CD8-positive, alpha-beta T cell (primary cell): ENCODE measurements at regions of chr19 and their contacts with region 1.

Region 1: GRCh38 chr19:56393119-56394012 is at the start of gene ZNF582:
- DNase-seq: peak; percentile 83 to 97 (median 89)
- ATAC-seq: peak; percentile 97
- H3K4me3 ChIP-seq: peak within 1 kb of the TSS; percentile 77 to 87
- H3K4me3 Mint-ChIP-seq: peak within 1 kb of the TSS; percentile 100
- H3K27ac ChIP-seq: peak within 1 kb of the TSS; percentile 94 to 96
- H3K27ac Mint-ChIP-seq: peak within 1 kb of the TSS; percentile 96
- H3K4me1 ChIP-seq: peaks cover 11% of the 10 kb centered on the region
- H3K4me1 Mint-ChIP-seq: peaks cover 22% of the 10 kb centered on the region
- H3K27me3 ChIP-seq: no peaks in the 10 kb centered on the region
- H3K27me3 Mint-ChIP-seq: no peaks in the 10 kb centered on the region
- CTCF ChIP-seq: peak; percentile 71
- total RNA-seq, gene ZNF582: 4.6 to 4.7 TPM

Region 2: DNA sequence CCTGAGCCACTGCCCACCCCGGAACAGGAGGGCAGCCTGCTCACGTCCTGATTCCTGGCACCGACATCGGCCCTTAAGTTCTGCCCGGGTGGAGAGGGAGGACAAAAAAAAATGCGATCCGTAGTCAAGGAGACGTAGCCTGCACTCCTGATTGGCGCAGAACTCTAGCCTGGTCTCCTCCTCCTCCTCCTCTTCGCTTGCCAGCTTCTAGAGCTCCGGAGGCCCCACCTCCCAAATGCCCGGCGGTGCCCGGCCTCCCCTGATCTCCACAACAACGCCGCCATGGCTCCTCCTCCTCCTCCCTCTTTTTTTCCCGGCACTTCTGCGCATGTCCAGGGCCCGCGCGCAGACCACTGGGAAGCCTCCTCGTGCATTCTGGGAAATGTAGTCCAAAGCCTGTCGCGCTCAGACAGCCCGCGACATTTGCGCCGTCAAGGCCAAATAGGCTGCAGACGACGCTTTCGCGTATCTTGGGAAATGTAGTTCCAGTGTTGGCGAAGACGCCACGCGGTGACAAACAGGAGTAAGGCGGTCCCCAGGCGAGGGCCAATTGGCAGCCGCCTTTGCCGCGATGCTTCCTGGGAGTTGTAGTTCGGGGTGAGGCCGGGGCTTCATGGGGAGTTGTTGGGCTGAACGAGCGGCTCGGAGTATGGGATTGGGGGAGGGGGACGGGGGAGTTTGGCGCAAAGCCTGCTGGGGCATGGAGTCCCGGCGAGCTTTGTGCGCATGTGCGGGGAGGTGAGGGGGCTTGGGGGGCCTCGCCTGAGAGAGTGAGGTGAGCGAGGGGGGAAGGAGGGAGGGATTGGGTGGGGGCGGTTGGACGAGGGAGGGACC is 252.6 kb before region 1 on chr19 and contains the start of gene ZNF444:
- CTCF ChIA-PET with region 1: no interaction called
- POLR2A ChIA-PET with region 1: no interaction called
- intact Hi-C with region 1: loop called (anchors 1 kb)
- DNase-seq: peak; percentile 98 to 100 (median 99)
- ATAC-seq: peak; percentile 84
- H3K4me3 ChIP-seq: peak within 1 kb of the TSS; percentile 69 to 74
- H3K4me3 Mint-ChIP-seq: peak within 1 kb of the TSS; percentile 92
- H3K27ac ChIP-seq: peak within 1 kb of the TSS; percentile 66 to 86
- H3K27ac Mint-ChIP-seq: peak within 1 kb of the TSS; percentile 93
- H3K4me1 ChIP-seq: peaks cover 20% of the 10 kb centered on the region
- H3K4me1 Mint-ChIP-seq: peaks cover 38% of the 10 kb centered on the region
- H3K27me3 ChIP-seq: no peaks in the 10 kb centered on the region
- H3K27me3 Mint-ChIP-seq: no peaks in the 10 kb centered on the region
- CTCF ChIP-seq: no peak
- total RNA-seq, gene ZNF444: 17.2 to 18.6 TPM

Region 3: DNA sequence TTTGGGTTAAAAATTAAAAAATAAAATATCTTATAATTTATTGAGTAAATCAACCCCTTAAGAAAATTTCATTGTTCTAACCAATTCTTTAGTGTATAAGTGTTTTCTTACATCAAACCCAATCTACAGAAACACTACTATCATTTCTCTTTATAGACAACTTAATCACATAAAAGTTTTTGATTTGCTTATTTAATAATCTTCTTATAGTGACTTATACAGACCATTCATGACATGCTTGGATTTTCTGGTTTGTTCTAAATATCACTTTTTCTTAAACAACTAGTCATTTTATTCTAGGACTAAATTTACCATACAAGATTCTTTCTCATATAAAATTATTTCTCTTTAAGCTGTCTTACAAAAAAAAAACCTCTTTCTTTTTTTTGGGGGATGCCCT is 51.4 kb before region 1 on chr19:
- CTCF ChIA-PET with region 1: no interaction called
- POLR2A ChIA-PET with region 1: no interaction called
- intact Hi-C with region 1: no loop called
- DNase-seq: no peak
- ATAC-seq: no peak
- H3K4me3 ChIP-seq: no peak overlapping the region
- H3K4me3 Mint-ChIP-seq: no peak overlapping the region
- H3K27ac ChIP-seq: no peak overlapping the region
- H3K27ac Mint-ChIP-seq: no peak overlapping the region
- H3K4me1 ChIP-seq: no peaks in the 10 kb centered on the region
- H3K4me1 Mint-ChIP-seq: no peaks in the 10 kb centered on the region
- H3K27me3 ChIP-seq: no peaks in the 10 kb centered on the region
- H3K27me3 Mint-ChIP-seq: peaks cover 14% of the 10 kb centered on the region
- CTCF ChIP-seq: no peak

Region 4: DNA sequence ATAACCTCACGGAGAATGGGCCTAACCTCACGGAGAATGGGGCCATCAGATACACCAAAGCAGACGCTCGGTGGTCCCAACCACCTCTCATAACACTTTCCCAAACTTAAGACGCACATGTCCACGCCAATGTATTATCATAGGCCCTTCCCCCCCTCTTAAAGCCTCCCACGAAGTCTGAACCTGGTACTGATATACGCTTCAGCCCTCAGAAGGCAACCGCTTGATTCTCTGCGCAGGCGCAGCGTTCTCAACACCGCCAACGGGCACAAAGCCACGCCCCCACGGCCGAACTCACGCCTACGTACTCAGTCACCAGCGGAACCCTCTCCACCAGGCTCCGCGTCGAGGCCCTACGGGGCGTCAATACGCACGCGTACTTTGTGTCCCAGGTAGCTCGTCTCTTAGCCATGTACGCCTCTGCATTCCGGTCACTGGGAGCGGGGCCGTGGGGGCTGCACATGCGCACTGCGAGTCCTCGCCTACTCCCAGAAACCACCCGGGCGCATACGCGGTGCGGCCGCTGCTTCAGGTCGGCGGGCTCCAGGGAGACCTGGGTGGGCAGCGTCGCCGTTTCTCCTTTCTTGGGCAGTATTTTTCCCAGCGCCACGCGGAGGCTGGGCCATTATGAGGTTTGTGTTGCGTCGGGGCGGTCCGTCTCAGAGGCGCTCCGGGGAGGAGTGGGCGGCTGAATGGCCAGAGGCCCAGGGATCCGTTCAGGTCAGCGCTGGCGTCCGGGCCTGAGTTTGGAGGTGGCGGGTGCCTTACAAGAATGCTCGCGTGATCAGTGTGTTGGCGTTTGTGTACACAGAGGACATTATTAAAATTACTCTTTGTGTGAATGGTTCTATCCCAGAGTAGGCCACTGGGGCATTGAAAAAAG is 25.3 kb before region 1 on chr19:
- CTCF ChIA-PET with region 1: interaction called, 3 read pairs
- POLR2A ChIA-PET with region 1: no interaction called
- intact Hi-C with region 1: loop called (anchors 1 to 2 kb)
- DNase-seq: peak; percentile 52 to 90 (median 78)
- ATAC-seq: peak; percentile 96
- H3K4me3 ChIP-seq: peak overlapping the region; percentile 62 to 74
- H3K4me3 Mint-ChIP-seq: peak overlapping the region; percentile 95
- H3K27ac ChIP-seq: peak overlapping the region; percentile 44 to 75
- H3K27ac Mint-ChIP-seq: peak overlapping the region; percentile 92
- H3K4me1 ChIP-seq: peaks cover 10% of the 10 kb centered on the region
- H3K4me1 Mint-ChIP-seq: peaks cover 28% of the 10 kb centered on the region
- H3K27me3 ChIP-seq: no peaks in the 10 kb centered on the region
- H3K27me3 Mint-ChIP-seq: no peaks in the 10 kb centered on the region
- CTCF ChIP-seq: no peak

Region 5: DNA sequence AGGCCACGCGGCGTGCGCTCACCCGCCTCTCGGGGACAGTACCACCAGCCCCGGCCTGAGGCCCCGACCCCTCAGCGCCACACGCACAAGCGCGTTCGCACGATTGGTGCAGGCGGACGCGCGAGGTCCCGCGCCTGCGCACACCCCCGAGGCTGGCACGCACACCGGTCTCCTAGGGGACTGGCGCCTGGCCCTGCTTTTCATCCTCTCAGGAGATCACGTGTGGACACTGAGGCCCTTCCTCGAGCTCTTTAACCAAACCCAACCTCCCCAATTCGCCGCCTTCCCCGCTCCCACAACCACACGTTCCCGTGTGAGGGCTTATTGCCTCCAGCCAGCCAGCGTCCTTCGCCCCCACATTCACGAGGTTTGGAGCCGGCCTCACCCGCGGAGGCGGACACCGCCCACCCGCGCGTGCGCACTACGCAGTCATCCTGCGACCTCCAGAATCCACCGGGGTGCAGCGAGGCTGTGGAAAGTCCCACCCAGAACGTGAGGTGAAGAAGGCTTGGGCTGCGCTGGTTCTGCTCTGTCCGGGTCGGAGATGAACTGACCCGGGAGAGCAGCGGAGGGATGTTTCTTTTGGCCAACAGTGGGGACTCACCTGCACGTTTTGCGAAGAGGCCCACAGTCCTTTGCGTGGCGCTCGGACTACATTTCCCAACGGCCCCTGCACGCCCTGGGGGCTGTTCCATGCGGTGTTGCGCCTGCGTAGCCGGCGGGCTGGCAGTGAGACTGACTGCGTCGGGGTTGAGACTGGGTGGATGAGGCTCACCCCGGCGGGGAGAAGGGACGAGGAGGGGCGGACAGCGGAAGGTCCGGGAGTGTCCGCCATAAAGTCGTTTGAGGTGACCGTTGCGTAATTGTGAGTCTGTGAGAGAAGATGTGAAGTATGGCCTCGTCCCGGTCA is 84.3 kb after region 1 on chr19:
- CTCF ChIA-PET with region 1: no interaction called
- POLR2A ChIA-PET with region 1: no interaction called
- intact Hi-C with region 1: loop called (anchors 5 kb)
- DNase-seq: peak; percentile 21 to 84 (median 63)
- ATAC-seq: peak; percentile 66
- H3K4me3 ChIP-seq: peak overlapping the region; percentile 23 to 67
- H3K4me3 Mint-ChIP-seq: peak overlapping the region; percentile 96
- H3K27ac ChIP-seq: peak overlapping the region; percentile 56 to 84
- H3K27ac Mint-ChIP-seq: peak overlapping the region; percentile 95
- H3K4me1 ChIP-seq: no peaks in the 10 kb centered on the region
- H3K4me1 Mint-ChIP-seq: peaks cover 18% of the 10 kb centered on the region
- H3K27me3 ChIP-seq: no peaks in the 10 kb centered on the region
- H3K27me3 Mint-ChIP-seq: peaks cover 19% of the 10 kb centered on the region
- CTCF ChIP-seq: no peak

Region 6: DNA sequence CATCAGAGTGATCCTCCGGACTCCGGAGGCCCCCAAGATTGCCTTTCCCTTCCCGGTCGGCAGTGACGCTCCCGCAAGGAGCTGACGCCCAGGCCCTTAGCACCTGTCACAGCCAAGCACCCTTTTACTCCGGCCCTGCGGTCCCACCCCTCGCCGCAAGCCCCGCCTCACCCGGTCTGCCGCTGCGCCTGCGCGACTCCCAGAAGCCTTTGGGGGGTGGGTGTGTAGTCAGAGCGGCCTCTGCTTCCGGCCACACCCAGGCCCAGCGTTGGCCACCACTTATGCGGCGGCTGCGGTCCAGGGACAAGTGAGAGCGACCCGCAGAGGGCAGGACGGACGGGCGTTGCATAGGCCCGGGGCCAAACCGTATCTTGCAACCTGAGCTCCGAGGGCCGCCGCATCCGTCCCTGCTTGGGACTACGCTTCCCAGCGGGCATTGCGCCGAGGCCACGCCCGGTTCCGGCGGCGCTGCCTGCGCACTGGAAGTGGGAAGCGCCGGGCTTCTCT is 144.9 kb after region 1 on chr19:
- CTCF ChIA-PET with region 1: no interaction called
- POLR2A ChIA-PET with region 1: no interaction called
- intact Hi-C with region 1: loop called (anchors 1 kb)
- DNase-seq: peak; percentile 73 to 92 (median 89)
- ATAC-seq: peak; percentile 90
- H3K4me3 ChIP-seq: peak overlapping the region; percentile 71 to 95
- H3K4me3 Mint-ChIP-seq: peak overlapping the region; percentile 92
- H3K27ac ChIP-seq: peak overlapping the region; percentile 72 to 87
- H3K27ac Mint-ChIP-seq: peak overlapping the region; percentile 95
- H3K4me1 ChIP-seq: peaks cover 12% of the 10 kb centered on the region
- H3K4me1 Mint-ChIP-seq: peaks cover 22% of the 10 kb centered on the region
- H3K27me3 ChIP-seq: no peaks in the 10 kb centered on the region
- H3K27me3 Mint-ChIP-seq: no peaks in the 10 kb centered on the region
- CTCF ChIP-seq: no peak

Region 7: GRCh38 chr19:56594783-56595547 is 201.6 kb after region 1 on chr19 and contains the start of gene ZNF71:
- CTCF ChIA-PET with region 1: no interaction called
- POLR2A ChIA-PET with region 1: no interaction called
- intact Hi-C with region 1: loop called (anchors 1 to 5 kb)
- DNase-seq: peak; percentile 72 to 91 (median 87)
- ATAC-seq: peak; percentile 96
- H3K4me3 ChIP-seq: peak within 1 kb of the TSS; percentile 45 to 72
- H3K4me3 Mint-ChIP-seq: peak within 1 kb of the TSS; percentile 91
- H3K27ac ChIP-seq: peak within 1 kb of the TSS; percentile 58 to 65
- H3K27ac Mint-ChIP-seq: peak within 1 kb of the TSS; percentile 91
- H3K4me1 ChIP-seq: peaks cover 18% of the 10 kb centered on the region
- H3K4me1 Mint-ChIP-seq: peaks cover 19% of the 10 kb centered on the region
- H3K27me3 ChIP-seq: no peaks in the 10 kb centered on the region
- H3K27me3 Mint-ChIP-seq: no peaks in the 10 kb centered on the region
- CTCF ChIP-seq: no peak
- total RNA-seq, gene ZNF71: 2.4 to 2.8 TPM

Region 8: GRCh38 chr19:57362997-57363705 is 969.8 kb after region 1 on chr19 and contains the starts of genes TRAPPC2B and ZNF547:
- CTCF ChIA-PET with region 1: no interaction called
- POLR2A ChIA-PET with region 1: no interaction called
- intact Hi-C with region 1: loop called in 1 of 2 experiments (anchors 10 kb)
- DNase-seq: peak; percentile 96 to 99 (median 99)
- ATAC-seq: peak; percentile 89
- H3K4me3 ChIP-seq: peak within 1 kb of the TSS; percentile 63 to 66
- H3K4me3 Mint-ChIP-seq: peak within 1 kb of the TSS; percentile 86
- H3K27ac ChIP-seq: peak within 1 kb of the TSS; percentile 81 to 95
- H3K27ac Mint-ChIP-seq: peak within 1 kb of the TSS; percentile 98
- H3K4me1 ChIP-seq: peaks cover 12% of the 10 kb centered on the region
- H3K4me1 Mint-ChIP-seq: peaks cover 18% of the 10 kb centered on the region
- H3K27me3 ChIP-seq: no peaks in the 10 kb centered on the region
- H3K27me3 Mint-ChIP-seq: no peaks in the 10 kb centered on the region
- CTCF ChIP-seq: no peak
- total RNA-seq, gene TRAPPC2B: 8.6 to 9.9 TPM
- total RNA-seq, gene ZNF547: 0.72 to 0.81 TPM